ENCODE measurements at regions of chr3 and their contacts with region 1.

Region 1: DNA sequence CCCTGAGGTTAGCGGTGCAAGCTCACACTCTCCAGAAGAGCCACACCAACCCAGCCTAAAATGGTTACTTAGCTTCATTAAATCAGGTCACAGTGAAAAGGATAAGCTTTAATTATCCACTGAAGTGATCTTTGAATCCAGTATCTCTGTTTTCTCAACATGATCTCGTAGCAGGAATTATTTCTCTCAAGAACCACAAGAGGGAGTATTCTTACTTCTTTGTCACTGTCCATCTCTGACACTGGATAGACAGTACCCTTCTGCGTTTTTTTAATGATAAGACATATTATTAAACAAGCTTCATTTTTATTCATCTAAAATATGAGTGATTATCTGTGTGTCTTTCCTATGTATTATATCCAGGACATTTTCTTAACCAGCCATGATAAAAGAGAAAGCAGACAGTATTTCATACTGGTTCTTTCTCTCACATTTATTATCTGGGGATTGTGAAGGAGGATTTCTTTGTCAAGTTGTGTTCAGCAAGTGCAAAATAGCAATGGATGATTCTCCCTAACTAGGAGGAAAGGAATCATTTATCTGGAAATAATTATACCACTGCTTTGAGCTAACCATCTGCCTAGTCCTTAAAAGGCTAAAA is 105.4 kb upstream of the CCDC54 start:
- DNase-seq: peak in 6 of 9 donors; percentile 1 to 43 (median 20)
- ATAC-seq: peak; percentile 64
- H3K4me3 ChIP-seq: no peak overlapping the region
- H3K4me3 Mint-ChIP-seq: no peak overlapping the region
- H3K27ac ChIP-seq: no peak overlapping the region
- H3K27ac Mint-ChIP-seq: no peak overlapping the region
- H3K4me1 ChIP-seq: no peaks in the 10 kb centered on the region
- H3K4me1 Mint-ChIP-seq: peaks cover 0 to 2% (median 0%) of the 10 kb centered on the region in 7 donors
- H3K27me3 ChIP-seq: peaks cover 0 to 3% of the 10 kb centered on the region in 2 donors
- H3K27me3 Mint-ChIP-seq: peaks cover 6 to 42% (median 25%) of the 10 kb centered on the region in 5 donors

Region 2: GRCh38 chr3:107421170-107421792 is 149.4 kb after region 1 on chr3:
- CTCF ChIA-PET with region 1: interaction called, 7 read pairs
- POLR2A ChIA-PET with region 1: no interaction called
- intact Hi-C with region 1: loop called (anchors 1 kb)
- DNase-seq: peak in 5 of 9 donors; percentile 47 to 63 (median 53)
- ATAC-seq: peak; percentile 82
- H3K4me3 ChIP-seq: no peak overlapping the region
- H3K4me3 Mint-ChIP-seq: peak overlapping the region in 8 of 10 donors; percentile 31 to 72 (median 66)
- H3K27ac ChIP-seq: no peak overlapping the region
- H3K27ac Mint-ChIP-seq: peak overlapping the region in 1 of 9 donors; percentile 1
- H3K4me1 ChIP-seq: no peaks in the 10 kb centered on the region
- H3K4me1 Mint-ChIP-seq: peaks cover 2 to 5% (median 3%) of the 10 kb centered on the region in 7 donors
- H3K27me3 ChIP-seq: no peaks in the 10 kb centered on the region
- H3K27me3 Mint-ChIP-seq: peaks cover 10 to 50% (median 21%) of the 10 kb centered on the region in 5 donors

Region 3: DNA sequence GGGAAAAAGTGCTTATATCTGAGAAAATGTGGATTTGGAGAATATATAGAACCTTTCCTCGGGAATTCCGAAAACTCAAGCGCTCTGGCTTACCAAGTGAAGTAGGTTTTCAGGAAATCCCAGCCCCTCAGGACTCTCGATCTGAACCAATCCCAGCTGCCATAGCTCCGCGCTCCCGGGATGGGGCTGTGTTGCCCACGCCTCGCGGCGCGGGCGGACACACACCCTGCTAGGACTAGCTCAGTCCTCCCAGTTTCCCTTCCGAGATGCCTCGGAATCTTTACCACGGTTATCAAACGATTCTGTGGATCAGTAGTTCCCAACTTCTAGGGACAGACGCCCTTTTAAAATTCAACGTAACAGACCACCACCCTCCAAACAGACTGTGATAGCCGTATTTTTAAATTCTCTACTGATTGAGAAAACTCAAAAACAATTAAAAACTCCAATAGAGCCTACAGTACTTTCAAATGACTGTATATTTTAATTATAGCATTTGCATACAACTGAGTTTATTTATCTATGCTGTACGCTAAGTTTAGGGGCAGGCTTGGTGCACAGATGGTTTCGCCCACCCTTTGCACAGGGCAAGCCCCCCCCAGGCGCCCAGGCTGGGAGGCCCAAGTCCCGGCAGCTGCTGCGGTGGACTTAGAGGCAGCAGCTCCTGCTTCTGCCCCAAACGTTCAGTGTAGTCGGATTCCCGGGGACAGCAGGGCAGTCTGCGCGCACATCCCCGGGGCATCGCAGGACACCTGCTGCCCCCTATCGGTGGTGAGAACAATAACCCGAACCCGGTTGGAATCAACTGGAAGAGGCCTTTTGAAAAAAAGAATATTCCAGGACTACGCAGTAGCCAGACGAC is 157.7 kb after region 1 on chr3:
- CTCF ChIA-PET with region 1: interaction called, 6 read pairs
- POLR2A ChIA-PET with region 1: no interaction called
- intact Hi-C with region 1: loop called in 1 of 2 experiments (anchors 1 kb)
- DNase-seq: peak; percentile 33 to 72 (median 61)
- ATAC-seq: peak; percentile 77
- H3K4me3 ChIP-seq: peak overlapping the region; percentile 76
- H3K4me3 Mint-ChIP-seq: peak overlapping the region; percentile 81 to 95 (median 90)
- H3K27ac ChIP-seq: no peak overlapping the region
- H3K27ac Mint-ChIP-seq: peak overlapping the region in 3 of 9 donors; percentile 25 to 80 (median 38)
- H3K4me1 ChIP-seq: peaks cover 11 to 12% of the 10 kb centered on the region in 2 donors
- H3K4me1 Mint-ChIP-seq: peaks cover 0 to 27% (median 13%) of the 10 kb centered on the region in 7 donors
- H3K27me3 ChIP-seq: no peaks in the 10 kb centered on the region
- H3K27me3 Mint-ChIP-seq: peaks cover 0 to 61% (median 0%) of the 10 kb centered on the region in 5 donors